OCI-LY7 (cell line): ENCODE measurements at regions of chr4 and their contacts with region 1.

Region 1: DNA sequence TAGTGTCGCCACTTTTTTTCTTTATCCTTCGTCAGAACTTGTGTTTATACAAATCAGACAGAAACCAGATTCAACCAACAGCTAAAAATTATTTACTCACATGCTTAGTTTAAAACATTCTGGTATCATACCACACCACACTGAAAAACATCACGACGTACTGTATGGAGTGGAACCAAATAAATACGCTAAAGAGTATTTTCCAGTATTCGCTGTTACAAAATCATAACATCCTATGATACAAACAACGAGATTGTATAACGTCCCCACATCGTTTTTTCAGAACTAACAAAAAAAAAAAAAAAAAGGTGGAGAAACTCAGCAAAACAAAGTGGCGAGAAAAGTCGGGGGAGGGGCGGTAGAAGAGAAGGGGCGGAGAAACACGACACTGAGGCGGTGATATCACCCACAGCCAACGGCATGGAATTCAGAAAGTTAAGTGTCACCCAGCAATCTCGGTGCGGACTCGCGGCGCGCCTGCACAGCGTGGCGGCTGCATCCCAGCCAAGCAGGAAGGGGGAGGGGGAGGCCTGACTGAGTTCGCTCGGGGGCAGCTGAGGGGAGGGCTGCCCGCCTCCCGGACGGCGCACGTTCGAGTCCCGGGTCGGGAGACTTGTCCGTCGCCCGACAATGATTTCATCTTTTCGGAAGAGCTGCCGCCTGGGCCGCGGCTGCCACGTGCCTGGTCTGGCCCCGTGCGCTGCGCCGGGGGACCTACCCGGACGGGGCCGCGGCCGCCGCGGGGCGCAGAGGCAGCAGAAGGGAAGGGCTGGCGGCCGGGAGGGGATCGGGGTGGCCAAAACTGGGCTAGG is 920 bp downstream of the SETD7 start:
- DNase-seq: peak; percentile 91
- H3K4me3 ChIP-seq: peak overlapping the region; percentile 81
- H3K27ac ChIP-seq: peak overlapping the region; percentile 87
- H3K4me1 ChIP-seq: peaks cover 72% of the 10 kb centered on the region
- CTCF ChIP-seq: no peak

Region 2: DNA sequence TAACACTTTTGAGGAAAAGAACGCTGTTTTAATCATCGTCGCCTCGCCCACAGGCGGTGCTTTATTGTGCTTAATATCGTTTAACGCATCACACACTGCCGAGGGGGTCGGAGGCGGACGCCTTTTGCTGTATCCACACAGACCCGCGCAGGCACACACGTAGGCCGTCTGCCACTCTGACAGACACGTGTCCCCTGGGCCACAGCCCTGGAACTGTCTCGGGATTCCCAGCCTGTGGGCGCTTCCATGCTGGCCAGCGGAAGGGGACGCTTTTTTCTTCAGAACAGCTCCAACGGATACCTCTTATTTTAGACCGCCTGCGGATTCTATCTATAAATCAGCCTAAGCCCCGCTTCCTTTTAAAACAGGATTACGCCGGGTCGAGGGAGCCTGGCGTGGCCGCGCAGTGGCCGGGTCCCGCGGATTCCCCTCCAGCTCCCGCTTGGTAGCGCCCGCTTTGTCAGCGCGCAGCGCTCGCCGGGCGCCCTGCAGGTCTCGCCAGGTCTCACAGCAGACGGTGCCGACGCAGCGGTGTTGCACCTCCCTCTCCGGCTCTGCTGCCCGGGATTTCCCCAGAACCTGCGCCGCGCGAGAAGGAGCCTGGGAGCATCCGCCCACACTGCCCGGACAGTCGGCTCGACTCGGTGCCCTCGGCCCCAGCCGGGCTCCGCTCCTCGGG is 539.7 kb before region 1 on chr4 and contains the start of gene NOCT:
- CTCF ChIA-PET with region 1: no interaction called
- POLR2A ChIA-PET with region 1: no interaction called
- intact Hi-C with region 1: loop called (anchors 5 kb)
- DNase-seq: peak; percentile 95
- H3K4me3 ChIP-seq: peak within 1 kb of the TSS; percentile 88
- H3K27ac ChIP-seq: peak within 1 kb of the TSS; percentile 79
- H3K4me1 ChIP-seq: peaks cover 38% of the 10 kb centered on the region
- CTCF ChIP-seq: no peak
- total RNA-seq, gene NOCT: 12.7 and 22.8 TPM in 2 replicates

Region 3: DNA sequence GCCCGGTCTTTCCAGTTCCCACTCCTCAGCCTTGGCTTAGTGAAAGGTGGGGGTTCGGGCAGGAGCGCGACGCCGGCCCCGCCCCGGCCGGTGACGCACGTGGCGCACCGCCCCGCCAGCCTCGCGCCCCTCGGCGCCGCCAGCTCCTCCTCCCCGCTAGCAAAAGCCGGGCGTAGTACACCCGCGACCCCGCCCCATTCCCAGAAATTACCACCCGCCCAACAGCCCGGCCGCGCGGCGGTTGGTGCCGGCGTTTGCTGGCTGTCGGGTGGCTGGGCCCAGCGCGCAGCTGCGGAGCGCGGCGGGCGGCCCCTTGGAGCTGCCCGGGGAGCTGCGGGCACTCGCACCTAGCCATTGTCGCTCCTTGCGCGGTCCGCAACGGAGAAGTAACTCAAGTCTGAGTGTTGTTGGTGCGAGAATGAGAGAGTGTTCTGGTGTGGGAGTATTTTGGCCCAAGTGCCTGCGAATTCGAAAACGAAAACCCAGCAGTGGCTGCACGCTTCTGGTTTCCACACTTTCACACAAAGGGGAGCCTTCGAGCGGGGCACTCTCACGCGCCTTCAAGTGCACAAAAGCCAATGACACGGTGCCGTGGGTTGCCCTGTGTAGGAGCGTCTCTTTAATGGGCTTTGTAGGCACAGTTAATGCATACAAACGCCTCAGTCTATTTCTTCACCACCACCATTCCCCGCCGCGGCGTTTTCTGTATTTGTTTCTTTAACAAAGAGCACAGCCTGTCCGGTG is 377.1 kb before region 1 on chr4:
- CTCF ChIA-PET with region 1: no interaction called
- POLR2A ChIA-PET with region 1: no interaction called
- intact Hi-C with region 1: loop called (anchors 2 kb)
- DNase-seq: peak; percentile 95
- H3K4me3 ChIP-seq: peak overlapping the region; percentile 83
- H3K27ac ChIP-seq: peak overlapping the region; percentile 89
- H3K4me1 ChIP-seq: peaks cover 25% of the 10 kb centered on the region
- CTCF ChIP-seq: no peak

Region 4: DNA sequence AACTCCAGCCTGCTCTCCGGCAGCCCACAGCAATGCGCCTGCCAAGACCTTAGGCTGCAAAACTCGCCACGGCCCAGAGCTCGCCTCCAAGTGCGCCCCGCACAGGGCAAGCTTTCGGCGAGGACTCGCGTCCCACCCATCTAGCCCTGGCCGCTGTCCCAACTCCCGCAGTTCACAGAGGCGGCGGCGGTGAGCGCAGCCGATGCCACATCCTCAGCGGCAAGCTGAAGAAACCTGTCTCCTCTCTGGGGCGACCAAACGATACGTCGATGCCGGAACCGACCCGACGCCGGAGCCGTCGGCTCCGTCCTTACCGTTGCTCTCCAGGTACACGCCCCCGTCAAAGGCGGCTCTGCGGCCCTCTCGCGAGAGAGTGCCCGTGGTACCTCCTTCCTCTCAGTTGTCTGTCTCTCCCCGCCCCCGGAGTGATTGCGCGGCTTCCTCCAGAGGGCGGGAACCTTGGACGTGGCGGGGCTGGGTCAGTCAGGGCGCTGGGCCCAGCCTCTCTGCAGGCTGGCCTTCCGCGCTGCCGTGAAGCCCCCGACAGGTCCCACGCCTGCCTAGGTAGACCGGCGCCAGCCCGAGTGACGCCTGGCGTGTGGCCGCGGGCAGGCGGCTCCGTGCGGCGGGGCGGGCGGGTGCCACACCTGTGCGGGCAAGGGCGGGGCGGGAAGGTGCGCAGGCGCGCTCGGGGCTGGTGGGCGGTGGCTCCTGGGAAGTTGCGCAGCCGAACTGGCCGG is 101.6 kb before region 1 on chr4:
- CTCF ChIA-PET with region 1: interaction called, 5 read pairs
- POLR2A ChIA-PET with region 1: interaction called, 10 read pairs
- intact Hi-C with region 1: loop called (anchors 1 kb)
- DNase-seq: peak; percentile 97
- H3K4me3 ChIP-seq: peak overlapping the region; percentile 82
- H3K27ac ChIP-seq: peak overlapping the region; percentile 88
- H3K4me1 ChIP-seq: peaks cover 43% of the 10 kb centered on the region
- CTCF ChIP-seq: peak; percentile 48; the same call in 1 of the 2 replicates

Region 5: DNA sequence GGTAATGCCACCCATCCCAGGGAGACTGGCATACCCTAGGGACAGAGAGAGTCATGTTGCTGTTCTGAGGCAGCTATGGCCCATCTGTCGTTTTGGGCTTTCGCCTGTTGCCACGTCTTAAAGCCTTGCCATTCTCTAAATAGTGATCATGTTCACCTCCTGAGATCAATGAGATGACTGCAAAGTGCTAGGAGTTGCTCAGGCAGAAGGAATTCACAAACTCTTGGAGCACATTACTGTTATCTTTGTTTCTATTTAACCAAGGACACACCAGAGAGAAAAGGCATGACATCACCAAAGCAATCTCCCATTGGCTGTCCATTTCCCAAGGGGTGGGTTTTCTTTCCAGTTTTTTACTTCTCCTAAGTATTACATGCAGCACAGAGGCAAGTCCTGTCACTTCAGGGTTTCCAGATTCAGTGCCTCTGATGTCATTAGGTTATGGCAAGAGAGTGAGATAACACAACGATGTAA is 38.0 kb after region 1 on chr4:
- CTCF ChIA-PET with region 1: no interaction called
- POLR2A ChIA-PET with region 1: no interaction called
- intact Hi-C with region 1: no loop called
- DNase-seq: no peak
- H3K4me3 ChIP-seq: no peak overlapping the region
- H3K27ac ChIP-seq: no peak overlapping the region
- H3K4me1 ChIP-seq: no peaks in the 10 kb centered on the region
- CTCF ChIP-seq: no peak

Region 6: GRCh38 chr4:139700568-139700967 is 145.5 kb after region 1 on chr4:
- CTCF ChIA-PET with region 1: no interaction called
- POLR2A ChIA-PET with region 1: no interaction called
- intact Hi-C with region 1: no loop called
- DNase-seq: no peak
- H3K4me3 ChIP-seq: no peak overlapping the region
- H3K27ac ChIP-seq: no peak overlapping the region
- H3K4me1 ChIP-seq: no peaks in the 10 kb centered on the region
- CTCF ChIP-seq: no peak

Region 7: DNA sequence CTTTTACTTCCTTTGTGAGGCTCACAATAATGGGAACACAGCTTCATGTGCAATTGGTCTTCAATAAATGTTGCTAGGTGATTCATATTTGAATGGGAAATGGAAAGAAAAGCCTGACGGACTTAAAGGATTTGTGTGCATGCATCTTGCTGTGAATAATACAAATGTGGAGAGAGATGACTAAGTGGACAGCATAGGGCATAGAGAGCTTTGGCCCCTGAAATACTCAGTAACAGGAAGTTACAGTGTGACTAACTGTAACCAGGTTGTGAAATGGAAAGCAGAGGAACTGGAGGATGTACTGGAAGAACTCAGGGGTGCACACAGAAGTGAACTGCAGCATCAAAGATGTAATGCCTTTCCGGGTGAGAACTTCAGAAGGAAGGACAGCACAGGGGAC is 317.2 kb after region 1 on chr4:
- CTCF ChIA-PET with region 1: no interaction called
- POLR2A ChIA-PET with region 1: no interaction called
- intact Hi-C with region 1: no loop called
- DNase-seq: no peak
- H3K4me3 ChIP-seq: no peak overlapping the region
- H3K27ac ChIP-seq: no peak overlapping the region
- H3K4me1 ChIP-seq: no peaks in the 10 kb centered on the region
- CTCF ChIP-seq: no peak

Region 8: DNA sequence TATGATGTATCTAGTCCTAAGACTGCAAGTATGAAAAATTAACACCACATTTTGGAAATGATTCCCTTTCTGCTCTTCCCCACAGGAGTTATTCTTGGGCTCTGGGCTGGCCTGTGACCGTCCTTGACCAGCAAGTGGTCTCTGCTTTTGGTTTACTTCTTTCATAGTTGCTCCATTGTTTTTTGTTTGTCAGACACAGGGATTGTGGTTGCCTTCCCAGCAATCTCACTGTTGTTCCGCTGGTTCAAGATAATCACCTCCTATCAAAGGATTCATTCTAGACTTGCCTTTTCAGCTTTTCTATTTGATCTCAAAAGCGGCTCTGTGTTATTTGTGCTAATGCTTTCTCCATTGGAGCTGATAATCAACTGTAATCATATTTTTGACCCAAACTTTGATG is 329.3 kb after region 1 on chr4:
- CTCF ChIA-PET with region 1: no interaction called
- POLR2A ChIA-PET with region 1: no interaction called
- intact Hi-C with region 1: no loop called
- DNase-seq: no peak
- H3K4me3 ChIP-seq: no peak overlapping the region
- H3K27ac ChIP-seq: no peak overlapping the region
- H3K4me1 ChIP-seq: no peaks in the 10 kb centered on the region
- CTCF ChIP-seq: no peak

Region 9: GRCh38 chr4:140153718-140154571 is 598.8 kb after region 1 on chr4 and contains the start of gene MAML3:
- CTCF ChIA-PET with region 1: no interaction called
- POLR2A ChIA-PET with region 1: no interaction called
- intact Hi-C with region 1: loop called (anchors 5 kb)
- DNase-seq: peak; percentile 91
- H3K4me3 ChIP-seq: peak within 1 kb of the TSS; percentile 72
- H3K27ac ChIP-seq: peak within 1 kb of the TSS; percentile 52
- H3K4me1 ChIP-seq: peaks cover 59% of the 10 kb centered on the region
- CTCF ChIP-seq: no peak
- total RNA-seq, gene MAML3: 1.2 and 1.8 TPM in 2 replicates

Region 10: DNA sequence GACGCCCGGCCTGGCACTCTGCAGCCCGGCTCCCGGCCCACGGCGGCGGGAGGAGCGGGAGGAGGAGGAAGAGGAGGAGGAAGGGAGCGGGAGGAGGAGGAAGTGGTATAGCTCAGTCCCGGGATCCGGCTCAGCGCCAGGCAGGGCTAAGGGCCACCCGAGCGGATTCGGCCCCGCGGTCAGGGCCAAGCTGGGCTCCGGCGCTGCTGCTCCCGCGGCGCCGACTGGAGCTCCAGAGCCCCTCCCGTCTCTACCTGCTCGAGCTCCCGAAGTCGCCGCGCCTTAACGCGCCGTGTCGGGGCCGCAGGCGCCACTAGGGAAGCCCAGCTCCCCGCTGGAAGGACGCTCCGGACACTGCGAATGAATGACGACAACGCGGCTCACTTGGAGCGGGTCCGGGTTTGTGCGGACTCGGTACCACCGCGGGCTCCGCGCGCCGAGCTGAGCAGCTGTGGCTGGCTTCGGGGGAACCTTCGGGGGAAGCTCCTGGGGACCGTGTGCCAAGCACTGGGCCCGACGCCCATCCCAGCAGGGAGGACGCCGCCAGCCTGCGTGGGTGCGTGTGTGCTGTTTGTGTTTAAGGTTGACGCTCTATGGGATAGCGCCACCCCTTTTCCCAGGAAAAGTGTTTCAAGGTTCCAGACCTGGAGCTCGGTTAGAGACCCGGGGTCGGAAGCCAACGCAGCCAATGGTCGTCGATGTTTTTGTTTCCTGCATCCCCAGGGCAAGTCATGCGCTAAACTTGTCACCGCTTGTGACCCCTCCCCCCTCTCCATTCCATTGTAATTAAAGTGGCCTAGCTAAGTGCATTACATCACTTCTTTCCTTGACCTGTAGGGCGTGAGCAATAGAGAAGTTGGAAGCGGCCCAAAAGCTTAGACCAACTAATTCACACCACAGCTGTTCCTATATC is 1201.5 kb after region 1 on chr4 and contains the start of gene TBC1D9:
- CTCF ChIA-PET with region 1: no interaction called
- POLR2A ChIA-PET with region 1: no interaction called
- intact Hi-C with region 1: loop called (anchors 10 kb)
- DNase-seq: peak; percentile 75
- H3K4me3 ChIP-seq: peak within 1 kb of the TSS; percentile 73
- H3K27ac ChIP-seq: no peak within 1 kb of the TSS
- H3K4me1 ChIP-seq: peaks cover 30% of the 10 kb centered on the region
- CTCF ChIP-seq: peak; percentile 33
- total RNA-seq, gene TBC1D9: 1.0 and 1.6 TPM in 2 replicates